PC-3 (cell line): ENCODE measurements at regions of chr20 and their contacts with region 1.

Region 1: GRCh38 chr20:50891138-50891537 is 40.1 kb downstream of the ADNP start:
- DNase-seq: peak; percentile 36
- ATAC-seq: peak; percentile 72
- H3K4me3 ChIP-seq: no peak overlapping the region
- H3K27ac ChIP-seq: no peak overlapping the region
- H3K4me1 ChIP-seq: peaks cover 7% of the 10 kb centered on the region; the same call in 1 of the 2 replicates
- H3K27me3 ChIP-seq: no peaks in the 10 kb centered on the region
- CTCF ChIP-seq: no peak

Region 2: GRCh38 chr20:50911716-50912115 is 20.6 kb after region 1 on chr20:
- CTCF ChIA-PET with region 1: no interaction called
- POLR2A ChIA-PET with region 1: interaction called, 10 read pairs
- intact Hi-C with region 1: no loop called
- DNase-seq: no peak
- ATAC-seq: no peak
- H3K4me3 ChIP-seq: no peak overlapping the region
- H3K27ac ChIP-seq: no peak overlapping the region
- H3K4me1 ChIP-seq: peaks cover 25% of the 10 kb centered on the region
- H3K27me3 ChIP-seq: no peaks in the 10 kb centered on the region
- CTCF ChIP-seq: no peak

Region 3: GRCh38 chr20:50929299-50930138 is 38.4 kb after region 1 on chr20:
- CTCF ChIA-PET with region 1: interaction called, 7 read pairs
- POLR2A ChIA-PET with region 1: no interaction called
- intact Hi-C with region 1: loop called (anchors 5 kb)
- DNase-seq: peak; percentile 92
- ATAC-seq: peak; percentile 34
- H3K4me3 ChIP-seq: peak overlapping the region; percentile 92
- H3K27ac ChIP-seq: peak overlapping the region; percentile 12
- H3K4me1 ChIP-seq: peaks cover 31% of the 10 kb centered on the region
- H3K27me3 ChIP-seq: no peaks in the 10 kb centered on the region
- CTCF ChIP-seq: peak; percentile 99